Activated T-helper 2 cell treated with anti-CD3 and anti-CD28 coated beads, Interferon-gamma antibody, Interleukin-2, Interleukin-4, amounts not matched to agents 10 μg/mL and 5 μg/mL and 100 μg/mL, durations not matched to agents 14 hours and 24 hours and 36 hours (primary cell): ENCODE measurements at regions of chr2 and their contacts with region 1.

Region 1: DNA sequence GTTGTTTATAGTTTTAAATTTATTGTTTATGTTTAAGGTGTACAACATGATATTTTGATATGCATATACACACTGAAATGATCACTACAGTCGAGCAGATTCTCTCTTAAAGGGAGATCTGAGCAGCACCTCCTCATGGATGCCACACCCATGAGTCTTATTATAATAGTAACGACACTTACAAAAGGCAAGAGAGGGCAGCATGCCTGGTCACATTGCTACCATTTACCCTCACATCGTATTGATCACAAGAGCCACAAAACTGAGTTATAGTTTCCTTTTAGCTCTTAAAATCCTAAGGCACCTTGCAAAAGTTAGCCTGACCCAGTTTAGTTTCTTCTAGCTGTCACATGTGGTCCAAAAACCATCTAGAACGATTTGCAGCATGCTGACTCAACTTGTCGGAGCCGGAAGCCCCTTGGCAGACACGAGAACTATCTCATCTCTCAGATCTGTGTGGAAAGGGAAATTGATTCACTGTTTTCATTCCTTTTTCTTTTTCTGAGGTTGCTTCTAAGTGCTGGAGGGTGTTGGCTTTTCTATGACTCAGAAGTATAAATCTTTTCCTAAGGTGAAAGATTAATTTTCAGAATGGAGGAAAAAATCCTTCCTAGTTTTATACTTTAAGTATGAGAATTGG is 85.3 kb downstream of the CDC42EP3 start:
- DNase-seq: peak; percentile 58
- H3K4me3 Mint-ChIP-seq: peak overlapping the region; percentile 30
- H3K27ac Mint-ChIP-seq: peak overlapping the region; percentile 76
- H3K4me1 Mint-ChIP-seq: peaks cover 77% of the 10 kb centered on the region
- H3K27me3 Mint-ChIP-seq: no peaks in the 10 kb centered on the region

Region 2: GRCh38 chr2:37376421-37377186 is 209.5 kb before region 1 on chr2:
- intact Hi-C with region 1: loop called (anchors 1 kb)
- DNase-seq: peak; percentile 20
- H3K4me3 Mint-ChIP-seq: peak overlapping the region; percentile 24
- H3K27ac Mint-ChIP-seq: peak overlapping the region; percentile 73
- H3K4me1 Mint-ChIP-seq: peaks cover 29% of the 10 kb centered on the region
- H3K27me3 Mint-ChIP-seq: peaks cover 44% of the 10 kb centered on the region

Region 3: DNA sequence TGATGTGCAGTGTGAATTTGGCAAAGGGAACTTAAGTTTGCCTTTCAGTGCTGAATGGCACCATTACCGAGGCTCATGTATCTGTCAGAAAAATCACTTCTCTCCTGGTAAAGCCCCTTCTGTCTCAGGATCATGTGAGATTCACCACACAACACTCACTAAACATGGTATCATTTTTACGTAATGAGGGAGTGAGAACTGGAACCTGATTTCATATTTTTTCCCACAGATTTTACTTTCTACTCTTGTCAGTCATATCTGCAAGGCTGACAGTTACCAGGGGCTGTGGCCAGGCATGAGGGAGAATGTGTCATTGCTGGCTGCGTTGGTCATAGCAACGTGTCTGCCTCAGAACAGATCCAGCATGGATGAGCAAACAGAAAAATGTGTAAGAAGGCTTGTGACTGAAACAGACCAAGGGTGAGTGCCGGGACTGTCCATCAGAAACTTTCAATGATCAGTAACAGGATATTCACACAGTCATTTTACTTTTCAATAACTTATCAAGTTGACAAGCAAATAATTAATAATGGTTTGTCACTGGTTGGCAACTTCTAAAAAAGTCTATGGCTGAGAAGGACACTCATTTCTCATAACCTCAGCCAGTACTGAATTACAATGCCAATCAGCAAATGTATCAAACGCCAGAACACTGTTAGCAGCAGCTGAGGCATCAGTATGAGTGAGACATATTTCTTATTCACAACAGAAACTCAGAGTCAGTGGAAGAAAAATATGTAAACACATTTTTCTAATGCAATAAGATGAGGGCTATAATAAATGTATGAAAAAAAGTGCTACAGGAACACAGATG is 15.1 kb before region 1 on chr2:
- intact Hi-C with region 1: loop called (anchors 1 kb)
- DNase-seq: no peak
- H3K4me3 Mint-ChIP-seq: no peak overlapping the region
- H3K27ac Mint-ChIP-seq: no peak overlapping the region
- H3K4me1 Mint-ChIP-seq: peaks cover 31% of the 10 kb centered on the region
- H3K27me3 Mint-ChIP-seq: peaks cover 8% of the 10 kb centered on the region

Region 4: GRCh38 chr2:37614061-37614738 is 28.1 kb after region 1 on chr2:
- intact Hi-C with region 1: no loop called
- DNase-seq: no peak
- H3K4me3 Mint-ChIP-seq: no peak overlapping the region
- H3K27ac Mint-ChIP-seq: no peak overlapping the region
- H3K4me1 Mint-ChIP-seq: peaks cover 21% of the 10 kb centered on the region
- H3K27me3 Mint-ChIP-seq: peaks cover 3% of the 10 kb centered on the region

Region 5: DNA sequence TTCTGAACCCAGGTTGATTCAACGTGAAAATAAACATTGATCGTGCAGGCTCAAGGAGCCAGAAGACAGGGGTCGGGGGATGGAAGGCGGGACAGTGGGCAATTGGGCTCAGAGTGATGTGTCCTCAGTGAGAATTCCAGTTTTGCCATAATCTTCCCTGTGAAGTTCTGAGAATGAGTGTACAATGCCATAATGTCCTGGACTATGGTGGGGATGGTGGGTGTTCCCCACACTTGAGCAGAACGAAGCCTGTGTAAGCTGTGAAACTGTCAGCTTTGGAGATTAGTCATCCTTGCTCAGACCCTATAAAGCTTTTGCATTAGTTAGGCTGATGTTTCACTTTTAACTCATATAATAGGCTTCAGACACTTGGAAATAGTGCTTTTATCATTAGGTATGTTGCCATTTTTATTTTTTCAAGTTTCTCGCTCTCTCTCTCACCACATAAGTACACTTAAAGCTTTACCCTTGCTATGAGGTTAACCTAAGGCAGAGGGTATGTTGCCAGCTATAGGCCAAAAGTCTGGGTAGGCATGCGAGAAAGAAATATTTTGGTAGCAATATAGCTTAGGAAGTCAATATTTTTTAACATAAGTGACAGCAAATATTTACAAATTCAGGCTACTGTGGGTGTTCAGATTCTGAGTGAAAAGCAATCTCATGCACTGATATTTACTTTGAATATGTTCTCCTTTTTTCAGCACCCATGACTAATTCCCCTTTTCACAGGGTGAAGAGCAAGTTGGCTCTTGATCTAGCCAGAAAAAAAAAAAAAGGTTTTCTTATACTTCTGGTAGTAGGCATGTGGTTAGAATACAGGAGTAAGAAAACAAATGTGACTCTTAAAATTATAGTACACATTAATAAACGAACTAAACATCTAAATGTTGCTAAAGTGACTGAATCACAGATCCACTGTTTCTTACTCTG is 38.1 kb after region 1 on chr2:
- intact Hi-C with region 1: loop called (anchors 1 kb)
- DNase-seq: no peak
- H3K4me3 Mint-ChIP-seq: no peak overlapping the region
- H3K27ac Mint-ChIP-seq: peak overlapping the region; percentile 30
- H3K4me1 Mint-ChIP-seq: peaks cover 42% of the 10 kb centered on the region
- H3K27me3 Mint-ChIP-seq: no peaks in the 10 kb centered on the region

Region 6: DNA sequence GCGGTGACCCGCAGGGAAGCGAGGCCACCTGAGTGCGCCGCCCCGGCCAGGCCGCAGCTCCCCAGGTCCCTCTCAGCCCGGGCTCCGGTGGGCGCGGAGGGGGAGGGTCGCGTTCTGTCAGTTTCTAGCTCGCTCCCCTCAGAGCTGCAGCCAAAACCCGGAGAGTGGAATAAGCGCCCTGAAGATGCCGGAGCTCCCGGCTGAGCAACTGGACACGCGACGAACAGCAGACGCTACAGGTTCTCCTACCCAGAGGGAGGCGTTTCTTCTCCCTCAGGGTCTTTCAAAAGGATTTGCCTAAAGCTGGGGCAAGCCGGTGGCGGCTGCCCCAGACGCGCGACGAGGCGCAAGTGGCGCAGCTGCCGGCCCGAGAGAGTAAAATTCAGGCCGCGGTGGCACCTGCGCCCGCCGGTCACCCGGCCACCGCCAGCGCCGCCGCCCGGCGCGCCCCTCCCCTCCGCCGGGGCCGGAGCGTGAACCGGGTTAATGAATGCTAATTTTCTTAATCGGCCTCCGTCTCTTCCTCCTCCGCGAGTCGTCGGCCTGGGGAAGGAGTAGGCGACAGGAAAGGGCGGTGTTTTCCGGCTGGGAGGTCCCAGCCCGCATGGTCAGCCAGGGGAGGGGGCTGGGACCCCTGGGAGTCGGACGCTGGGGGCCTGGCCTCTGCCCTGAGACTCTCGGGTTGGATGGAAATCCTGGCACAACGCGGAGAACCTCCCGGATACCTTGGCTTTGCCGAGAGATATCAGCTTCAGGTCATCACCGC is 86.2 kb after region 1 on chr2:
- intact Hi-C with region 1: loop called (anchors 1 kb)
- DNase-seq: peak; percentile 65
- H3K4me3 Mint-ChIP-seq: peak overlapping the region; percentile 75
- H3K27ac Mint-ChIP-seq: peak overlapping the region; percentile 65
- H3K4me1 Mint-ChIP-seq: peaks cover 32% of the 10 kb centered on the region
- H3K27me3 Mint-ChIP-seq: peaks cover 2% of the 10 kb centered on the region

Region 7: DNA sequence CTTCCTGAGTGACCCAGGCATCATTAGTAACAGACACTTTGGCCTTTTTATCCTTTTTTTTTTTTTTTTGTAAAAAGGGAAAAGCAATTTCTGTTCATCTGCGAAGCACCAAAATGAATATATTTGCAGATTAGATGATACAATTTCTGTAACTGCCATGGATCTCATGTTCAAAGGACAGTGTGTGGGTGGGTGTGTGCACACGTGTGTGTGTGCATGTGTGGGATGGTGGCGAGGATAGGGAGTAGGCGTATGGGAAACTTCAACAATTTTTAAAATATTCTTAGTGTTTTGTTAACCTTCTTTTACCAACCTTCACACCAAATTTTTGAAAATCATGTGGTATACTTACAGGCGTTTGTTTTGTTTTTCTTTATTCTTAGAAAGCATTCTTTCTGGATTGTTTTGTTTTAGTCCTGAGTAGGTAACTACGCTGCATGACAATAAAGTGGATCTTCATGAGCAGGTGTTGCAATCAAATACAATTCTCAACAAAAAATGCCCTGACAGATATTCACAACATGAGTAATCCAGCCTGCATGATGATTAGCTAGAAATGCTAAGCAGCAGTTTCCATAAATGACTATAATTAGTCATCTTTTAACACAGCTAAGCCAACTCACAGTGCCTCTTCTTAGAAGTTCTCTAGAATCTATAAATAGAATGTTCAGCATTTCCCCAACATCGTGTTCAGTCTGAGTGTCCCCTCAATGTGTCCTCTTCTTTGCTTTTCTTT is 285.5 kb after region 1 on chr2:
- intact Hi-C with region 1: loop called (anchors 5 kb)
- DNase-seq: no peak
- H3K4me3 Mint-ChIP-seq: peak overlapping the region; percentile 10
- H3K27ac Mint-ChIP-seq: peak overlapping the region; percentile 86
- H3K4me1 Mint-ChIP-seq: peaks cover 34% of the 10 kb centered on the region
- H3K27me3 Mint-ChIP-seq: peaks cover 2% of the 10 kb centered on the region